Tibial artery (tissue), 4 donors: ENCODE measurements at regions of chr14 and their contacts with region 1.

Region 1: DNA sequence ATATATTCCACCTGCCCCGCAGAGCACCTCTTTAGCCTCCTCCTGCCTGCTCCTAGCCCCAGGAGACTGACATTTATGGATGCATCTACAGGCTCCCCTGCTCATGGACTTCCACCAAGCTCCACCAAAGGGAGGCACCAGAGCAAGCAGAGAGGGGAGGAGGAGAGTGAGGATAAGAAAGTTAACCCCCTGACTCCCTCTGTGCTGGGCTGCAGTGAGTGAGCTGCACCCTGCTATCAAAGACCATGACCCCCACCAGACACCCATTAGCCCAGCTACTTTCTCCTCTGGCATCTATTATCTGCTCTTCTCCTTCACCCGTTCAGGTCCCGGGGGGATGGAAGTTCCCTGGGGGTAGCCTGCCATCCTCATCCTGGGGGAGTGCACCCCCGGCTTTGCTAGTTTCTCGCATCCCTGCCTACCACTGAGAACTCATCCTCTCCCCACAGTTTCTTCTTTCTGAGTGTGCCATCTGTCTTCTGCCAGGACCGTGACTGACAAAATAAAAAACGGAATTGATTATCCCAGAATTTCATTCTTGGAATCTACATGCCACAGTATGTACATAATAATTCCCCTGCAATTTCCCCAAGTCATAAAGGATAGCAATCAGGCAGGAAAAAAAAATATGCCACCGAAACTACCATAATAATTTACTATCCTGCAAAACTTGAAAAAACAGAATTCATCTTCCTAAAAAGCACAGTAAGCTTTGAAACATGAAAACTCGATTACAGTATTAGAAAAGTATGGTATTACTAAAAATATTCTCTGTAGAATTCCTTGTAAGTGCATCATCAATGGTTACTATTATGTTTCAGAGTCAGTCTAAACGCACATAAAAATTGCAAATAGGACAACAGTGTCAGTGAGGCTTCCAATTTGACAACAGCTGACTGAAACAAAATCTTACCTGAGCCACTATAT is 45.2 kb downstream of the FOXN3 start:
- DNase-seq: no peak
- H3K4me3 ChIP-seq: no peak overlapping the region
- H3K27ac ChIP-seq: no peak overlapping the region
- H3K4me1 ChIP-seq: peaks cover 0 to 64% (median 40%) of the 10 kb centered on the region in 4 donors
- H3K27me3 ChIP-seq: no peaks in the 10 kb centered on the region
- CTCF ChIP-seq: no peak

Region 2: DNA sequence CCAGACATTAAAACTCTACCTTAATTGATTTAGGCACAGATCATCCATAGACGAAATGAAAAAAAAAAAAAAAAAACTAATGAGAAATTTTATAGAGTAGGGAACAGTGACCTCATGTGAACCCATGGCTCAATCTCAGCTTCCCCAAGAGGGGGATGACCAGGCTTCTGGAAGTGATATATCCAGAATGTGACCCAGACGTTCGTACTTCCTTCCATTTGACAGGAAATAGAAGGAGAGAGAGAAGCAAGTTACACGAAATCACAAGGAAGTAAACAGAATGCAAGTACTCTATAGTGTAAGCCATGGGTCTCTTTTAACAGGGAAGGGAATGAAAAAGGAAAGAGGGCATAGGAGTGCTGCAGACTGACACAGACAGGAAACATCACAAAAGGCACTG is 35.1 kb after region 1 on chr14:
- intact Hi-C with region 1: loop called (anchors 5 kb)
- DNase-seq: no peak
- H3K4me3 ChIP-seq: no peak overlapping the region
- H3K27ac ChIP-seq: peak overlapping the region; percentile 20 to 61
- H3K4me1 ChIP-seq: peaks cover 0 to 93% (median 58%) of the 10 kb centered on the region in 4 donors
- H3K27me3 ChIP-seq: no peaks in the 10 kb centered on the region
- CTCF ChIP-seq: no peak

Region 3: DNA sequence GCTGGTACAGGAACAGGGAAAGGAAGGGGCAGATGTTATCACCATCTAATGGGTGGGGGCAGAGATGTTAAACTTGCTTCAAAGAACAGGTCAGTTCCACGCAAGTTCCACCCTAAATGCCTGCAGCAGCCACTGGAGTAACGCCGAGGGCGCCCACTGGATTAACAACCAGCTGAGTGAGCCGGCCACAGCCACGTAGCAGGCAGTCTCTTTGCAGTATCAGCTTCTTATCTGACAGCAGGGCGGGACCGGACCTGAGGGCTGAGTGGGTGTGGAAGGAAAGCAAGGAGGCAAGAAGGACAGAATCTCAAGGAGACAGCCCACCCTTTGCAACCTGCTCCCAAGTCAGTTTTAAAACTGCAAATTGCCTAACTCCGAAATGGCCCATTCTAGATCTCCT is 83.6 kb after region 1 on chr14:
- intact Hi-C with region 1: no loop called
- DNase-seq: no peak
- H3K4me3 ChIP-seq: no peak overlapping the region
- H3K27ac ChIP-seq: no peak overlapping the region
- H3K4me1 ChIP-seq: no peaks in the 10 kb centered on the region
- H3K27me3 ChIP-seq: no peaks in the 10 kb centered on the region
- CTCF ChIP-seq: no peak